ENCODE measurements at regions of chr14 and their contacts with region 1.

Region 1: GRCh38 chr14:106347890-106348755 is 821.7 kb downstream of the TMEM121 start:
- DNase-seq: no peak
- ATAC-seq: no peak
- H3K4me3 ChIP-seq: no peak overlapping the region
- H3K4me3 Mint-ChIP-seq: no peak overlapping the region
- H3K27ac ChIP-seq: no peak overlapping the region
- H3K27ac Mint-ChIP-seq: no peak overlapping the region
- H3K4me1 ChIP-seq: no peaks in the 10 kb centered on the region
- H3K4me1 Mint-ChIP-seq: peaks cover 0 to 7% (median 2%) of the 10 kb centered on the region in 7 donors
- H3K27me3 ChIP-seq: no peaks in the 10 kb centered on the region
- H3K27me3 Mint-ChIP-seq: peaks cover 13 to 62% (median 24%) of the 10 kb centered on the region in 5 donors

Region 2: GRCh38 chr14:106327234-106327633 is 20.9 kb before region 1 on chr14:
- CTCF ChIA-PET with region 1: no interaction called
- POLR2A ChIA-PET with region 1: no interaction called
- intact Hi-C with region 1: loop called in 1 of 2 experiments (anchors 1 kb)
- DNase-seq: no peak
- ATAC-seq: no peak
- H3K4me3 ChIP-seq: no peak overlapping the region
- H3K4me3 Mint-ChIP-seq: no peak overlapping the region
- H3K27ac ChIP-seq: no peak overlapping the region
- H3K27ac Mint-ChIP-seq: no peak overlapping the region
- H3K4me1 ChIP-seq: no peaks in the 10 kb centered on the region
- H3K4me1 Mint-ChIP-seq: peaks cover 0 to 1% (median 0%) of the 10 kb centered on the region in 7 donors
- H3K27me3 ChIP-seq: no peaks in the 10 kb centered on the region
- H3K27me3 Mint-ChIP-seq: peaks cover 15 to 41% (median 30%) of the 10 kb centered on the region in 5 donors

Measured in naive thymus-derived CD4-positive, alpha-beta T cell (primary cell).